GM12878 (cell line): ENCODE measurements at regions of chrX and their contacts with region 1.

Region 1: GRCh38 chrX:16148896-16149295 is 18.4 kb upstream of the MAGEB17 start:
- DNase-seq: no peak
- ATAC-seq: no peak
- H3K4me3 ChIP-seq: no peak overlapping the region
- H3K27ac ChIP-seq: no peak overlapping the region
- H3K4me1 ChIP-seq: no peaks in the 10 kb centered on the region
- H3K27me3 ChIP-seq: no peaks in the 10 kb centered on the region; a peak in 1 of 4 replicates
- CTCF ChIP-seq: no peak
- EP300 ChIP-seq: no peak
- POLR2A ChIP-seq: no peak
- RAD21 ChIP-seq: no peak

Region 2: GRCh38 chrX:16067886-16068515 is 80.9 kb before region 1 on chrX:
- CTCF ChIA-PET with region 1: no interaction called
- POLR2A ChIA-PET with region 1: no interaction called
- RAD21 ChIA-PET with region 1: no interaction called
- SMC1A ChIA-PET with region 1: no interaction called
- in situ Hi-C with region 1: no loop called
- intact Hi-C with region 1: no loop called
- DNase-seq: peak; percentile 30
- ATAC-seq: peak; percentile 92
- H3K4me3 ChIP-seq: no peak overlapping the region
- H3K27ac ChIP-seq: peak overlapping the region; percentile 47; the same call in 1 of the 2 replicates
- H3K4me1 ChIP-seq: no peaks in the 10 kb centered on the region
- H3K27me3 ChIP-seq: no peaks in the 10 kb centered on the region
- CTCF ChIP-seq: no peak
- EP300 ChIP-seq: no peak
- POLR2A ChIP-seq: no peak
- RAD21 ChIP-seq: no peak

Region 3: GRCh38 chrX:16138108-16138427 is 10.8 kb before region 1 on chrX:
- CTCF ChIA-PET with region 1: interaction called, 23 read pairs
- POLR2A ChIA-PET with region 1: no interaction called
- RAD21 ChIA-PET with region 1: interaction called, 3 read pairs
- SMC1A ChIA-PET with region 1: interaction called, 6 read pairs
- in situ Hi-C with region 1: no loop called
- intact Hi-C with region 1: no loop called
- DNase-seq: peak; percentile 16
- ATAC-seq: peak; percentile 82
- H3K4me3 ChIP-seq: no peak overlapping the region
- H3K27ac ChIP-seq: no peak overlapping the region
- H3K4me1 ChIP-seq: peaks cover 3% of the 10 kb centered on the region
- H3K27me3 ChIP-seq: peaks cover 0 to 2% of the 10 kb centered on the region in 2 experiments; a peak in 3 of 4 replicates
- CTCF ChIP-seq: peak; percentile 44 to 52 (median 51); a peak in 5 of 6 replicates
- EP300 ChIP-seq: no peak
- POLR2A ChIP-seq: no peak
- RAD21 ChIP-seq: peak; percentile 57

Region 4: GRCh38 chrX:16250296-16250695 is 101.4 kb after region 1 on chrX:
- CTCF ChIA-PET with region 1: no interaction called
- POLR2A ChIA-PET with region 1: no interaction called
- RAD21 ChIA-PET with region 1: no interaction called
- SMC1A ChIA-PET with region 1: no interaction called
- in situ Hi-C with region 1: no loop called
- intact Hi-C with region 1: no loop called
- DNase-seq: no peak
- ATAC-seq: no peak
- H3K4me3 ChIP-seq: no peak overlapping the region
- H3K27ac ChIP-seq: no peak overlapping the region
- H3K4me1 ChIP-seq: no peaks in the 10 kb centered on the region
- H3K27me3 ChIP-seq: peaks cover 1 to 2% of the 10 kb centered on the region in 2 experiments; a peak in 2 of 4 replicates
- CTCF ChIP-seq: no peak
- EP300 ChIP-seq: no peak
- POLR2A ChIP-seq: no peak
- RAD21 ChIP-seq: no peak